ENCODE measurements at regions of chr1 and their contacts with region 1.

Region 1: DNA sequence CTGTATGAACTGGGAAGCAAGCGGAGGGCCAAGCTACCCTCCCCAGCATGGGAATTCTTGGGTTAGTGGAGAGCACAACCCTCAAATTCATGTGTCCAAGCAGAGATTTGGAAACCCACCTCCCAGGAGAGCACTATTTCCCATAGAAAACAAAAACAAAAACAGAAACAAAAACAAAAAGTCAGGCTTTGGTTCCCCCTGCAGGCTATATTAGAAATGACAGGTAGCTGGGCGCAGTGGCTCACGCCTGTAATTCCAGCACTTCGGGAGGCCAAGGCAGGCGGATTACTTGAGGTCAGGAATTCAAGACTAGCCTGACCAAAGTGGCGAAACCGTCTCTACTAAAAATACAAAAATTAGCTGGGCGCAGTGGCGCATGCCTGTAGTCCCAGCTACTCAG is 10.8 kb downstream of the MINDY1 start:
- DNase-seq: no peak
- H3K4me3 ChIP-seq: no peak overlapping the region
- H3K27ac ChIP-seq: peak overlapping the region; percentile 36 to 66 (median 49)
- H3K4me1 ChIP-seq: peaks cover 0 to 7% (median 0%) of the 10 kb centered on the region in 4 donors
- H3K27me3 ChIP-seq: no peaks in the 10 kb centered on the region
- CTCF ChIP-seq: peak; percentile 86 to 91 (median 88)
- EP300 ChIP-seq: no peak
- POLR2A ChIP-seq: no peak

Region 2: DNA sequence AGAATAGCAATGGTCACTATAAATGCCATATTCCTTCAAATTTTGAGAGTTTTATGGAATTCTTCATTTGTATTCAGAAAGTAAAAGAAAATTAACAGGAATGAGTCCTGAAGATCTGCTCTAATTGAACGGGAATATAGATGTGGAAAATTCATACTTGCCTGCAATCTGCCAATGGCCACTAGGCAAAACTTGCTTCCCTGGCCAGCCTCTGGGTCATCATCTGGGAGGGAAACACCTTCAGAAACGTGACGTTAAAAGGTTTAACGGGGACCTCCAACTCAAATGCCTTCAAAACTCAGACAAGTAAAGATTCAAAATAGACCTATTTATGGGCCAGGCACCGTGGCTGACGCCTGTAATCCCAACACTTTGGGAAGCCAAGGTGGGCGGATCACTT is 166.2 kb before region 1 on chr1:
- in situ Hi-C with region 1: loop called in 1 of 4 experiments (anchors 10 kb)
- intact Hi-C with region 1: no loop called
- DNase-seq: no peak
- H3K4me3 ChIP-seq: no peak overlapping the region
- H3K27ac ChIP-seq: no peak overlapping the region
- H3K4me1 ChIP-seq: no peaks in the 10 kb centered on the region
- H3K27me3 ChIP-seq: no peaks in the 10 kb centered on the region
- CTCF ChIP-seq: peak in 4 of 5 experiments; percentile 19 to 24 (median 22)
- EP300 ChIP-seq: no peak
- POLR2A ChIP-seq: no peak

Region 3: GRCh38 chr1:151047925-151048645 is 52.2 kb after region 1 on chr1:
- in situ Hi-C with region 1: no loop called
- intact Hi-C with region 1: no loop called
- DNase-seq: peak; percentile 76
- H3K4me3 ChIP-seq: peak overlapping the region; percentile 54 to 80 (median 62)
- H3K27ac ChIP-seq: peak overlapping the region; percentile 85 to 89 (median 88)
- H3K4me1 ChIP-seq: peaks cover 3 to 16% (median 10%) of the 10 kb centered on the region in 4 donors
- H3K27me3 ChIP-seq: no peaks in the 10 kb centered on the region
- CTCF ChIP-seq: peak in 2 of 5 experiments; percentile 52 to 56
- EP300 ChIP-seq: no peak
- POLR2A ChIP-seq: no peak

Region 4: DNA sequence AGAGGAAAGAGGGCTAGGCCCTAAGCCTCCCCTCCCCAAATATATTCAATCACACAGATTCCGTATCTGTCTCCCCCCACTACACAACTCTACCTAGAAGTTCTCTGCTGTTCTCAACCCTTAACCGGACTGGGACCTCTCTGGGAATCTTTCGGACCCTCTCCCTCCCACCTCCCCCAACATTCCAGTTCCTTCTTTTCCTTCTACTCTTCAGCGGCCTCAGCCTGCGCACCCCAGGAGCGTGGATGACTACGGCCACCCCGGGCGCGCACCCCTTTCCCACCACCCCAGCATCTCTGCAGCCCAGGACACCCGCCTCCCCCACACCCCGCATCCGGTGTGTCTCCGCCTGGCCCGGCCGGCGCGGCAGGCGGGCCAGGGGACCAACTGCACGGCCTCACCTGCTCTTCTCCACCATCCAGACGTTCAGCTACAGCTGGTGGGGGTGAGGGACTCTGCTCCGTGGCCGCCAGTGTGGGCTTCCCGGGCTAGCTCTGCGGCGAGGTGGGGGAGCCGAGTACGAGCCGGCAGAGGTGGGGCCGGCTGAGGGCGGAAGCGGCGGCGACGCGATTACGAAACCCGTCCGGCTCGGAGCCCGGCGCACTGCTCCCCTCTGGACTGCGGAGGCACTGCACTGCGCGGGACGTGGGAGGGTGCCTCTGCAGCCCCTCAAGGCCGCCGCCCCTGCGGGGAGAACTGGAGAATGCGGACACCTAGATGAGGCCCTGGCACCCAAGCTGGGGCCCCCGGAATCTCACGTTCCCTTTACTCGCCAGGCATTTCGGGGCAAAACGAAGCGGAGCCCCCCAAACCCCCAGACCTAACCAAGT is 63.4 kb after region 1 on chr1 and contains the start of gene CDC42SE1:
- in situ Hi-C with region 1: no loop called
- intact Hi-C with region 1: no loop called
- DNase-seq: peak; percentile 86
- H3K4me3 ChIP-seq: peak within 1 kb of the TSS; percentile 66 to 92 (median 84)
- H3K27ac ChIP-seq: peak within 1 kb of the TSS; percentile 94 to 96 (median 96)
- H3K4me1 ChIP-seq: peaks cover 29 to 50% (median 38%) of the 10 kb centered on the region in 4 donors
- H3K27me3 ChIP-seq: no peaks in the 10 kb centered on the region
- CTCF ChIP-seq: peak; percentile 89 to 98 (median 94)
- EP300 ChIP-seq: no peak
- POLR2A ChIP-seq: peak; percentile 95
- total RNA-seq, gene CDC42SE1: 34.4 to 90.2 (median 57.5) TPM